ENCODE measurements at regions of chr19 and their contacts with region 1.

Region 1: GRCh38 chr19:1064661-1065605 is 2.0 kb upstream of the ARHGAP45 start:
- DNase-seq: no peak
- ATAC-seq: peak; percentile 73
- H3K4me3 ChIP-seq: no peak overlapping the region
- H3K27ac ChIP-seq: no peak overlapping the region
- H3K4me1 ChIP-seq: peaks cover 17% of the 10 kb centered on the region
- H3K27me3 ChIP-seq: no peaks in the 10 kb centered on the region
- CTCF ChIP-seq: peak; percentile 73 to 85 (median 82)
- EP300 ChIP-seq: no peak; a peak in 1 of 4 replicates
- POLR2A ChIP-seq: no peak; the same call in 1 of the 2 replicates
- RAD21 ChIP-seq: peak; percentile 54

Region 2: DNA sequence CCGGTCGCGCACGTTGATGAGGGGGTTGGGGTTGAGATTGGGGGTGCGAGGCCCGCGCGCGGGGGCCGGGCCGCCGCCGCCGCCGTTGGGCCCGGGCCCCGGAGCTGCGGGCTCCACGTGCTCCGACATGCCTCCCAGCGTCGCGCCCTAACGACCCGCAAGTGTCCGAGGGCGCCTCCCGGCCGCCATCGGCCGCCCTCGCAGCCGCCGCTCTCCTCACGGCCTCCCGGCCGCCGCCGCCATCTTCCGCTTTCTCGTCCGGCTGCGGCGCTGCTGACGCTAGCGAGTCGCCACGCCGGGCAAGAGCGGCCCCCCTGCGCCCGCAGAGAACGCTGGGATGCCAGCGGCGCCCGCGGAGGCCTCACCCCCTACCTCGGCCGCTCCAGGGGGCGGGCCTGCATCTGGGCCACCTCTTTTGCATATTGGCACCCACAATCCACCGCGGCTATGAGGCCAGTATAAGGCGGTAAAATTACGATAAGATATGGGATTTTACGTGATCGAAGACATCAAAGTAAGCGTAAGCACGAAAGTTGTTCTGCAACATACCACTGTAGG is 44.0 kb before region 1 on chr19 and contains the start of gene TMEM259:
- CTCF ChIA-PET with region 1: interaction called, 3 read pairs
- POLR2A ChIA-PET with region 1: interaction called, 23 read pairs
- RAD21 ChIA-PET with region 1: interaction called, 19 read pairs
- SMC1A ChIA-PET with region 1: interaction called, 4 read pairs
- in situ Hi-C with region 1: no loop called
- intact Hi-C with region 1: loop called (anchors 1 kb)
- DNase-seq: peak; percentile 92
- ATAC-seq: peak; percentile 86
- H3K4me3 ChIP-seq: peak within 1 kb of the TSS; percentile 83
- H3K27ac ChIP-seq: peak within 1 kb of the TSS; percentile 99
- H3K4me1 ChIP-seq: peaks cover 30% of the 10 kb centered on the region
- H3K27me3 ChIP-seq: no peaks in the 10 kb centered on the region
- CTCF ChIP-seq: no peak
- EP300 ChIP-seq: no peak
- POLR2A ChIP-seq: peak; percentile 82
- RAD21 ChIP-seq: no peak
- polyA plus RNA-seq, gene TMEM259: 0.43 to 0.86 TPM

Region 3: DNA sequence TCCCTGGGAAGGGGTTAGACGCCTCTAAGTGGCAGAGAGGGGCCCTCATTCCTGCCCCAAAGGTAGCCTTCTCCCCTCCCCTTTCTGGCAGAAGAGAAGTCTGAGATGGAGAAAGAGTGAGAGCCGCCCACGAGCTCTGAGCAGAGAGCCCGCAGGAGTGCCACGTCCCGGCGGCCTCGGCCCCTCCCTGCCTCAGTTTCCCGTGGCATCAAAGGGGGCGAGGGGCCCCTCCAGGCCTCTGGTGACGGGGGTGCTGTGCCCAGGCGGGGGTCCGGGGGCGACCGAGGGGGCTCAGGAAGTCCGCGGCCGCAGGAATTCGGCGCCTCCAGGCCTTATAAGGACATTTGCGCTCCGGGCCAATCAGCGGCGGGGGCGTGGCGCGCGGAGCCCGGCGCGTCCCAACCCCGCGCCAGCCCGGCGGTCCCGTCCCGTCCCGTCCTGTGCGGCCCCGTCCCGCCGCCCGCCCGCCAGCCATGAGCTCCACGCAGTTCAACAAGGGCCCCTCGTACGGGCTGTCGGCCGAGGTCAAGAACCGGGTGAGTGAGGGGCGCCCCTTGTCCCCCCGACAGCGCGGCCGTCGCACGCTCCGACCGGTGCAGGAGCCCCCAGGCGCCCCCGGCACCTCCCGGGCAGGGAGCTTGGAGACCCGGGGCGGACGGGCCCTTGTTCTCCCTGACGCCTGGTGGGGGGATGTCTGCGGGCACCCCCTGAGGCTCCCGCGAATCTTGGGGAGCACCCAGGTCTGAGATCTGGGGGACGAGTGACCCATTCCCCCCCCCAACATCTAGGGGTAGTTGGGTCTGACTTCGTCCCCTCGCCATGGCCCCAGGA is 38.5 kb before region 1 on chr19 and contains the start of gene CNN2:
- CTCF ChIA-PET with region 1: interaction called, 3 read pairs
- POLR2A ChIA-PET with region 1: interaction called, 23 read pairs
- RAD21 ChIA-PET with region 1: interaction called, 19 read pairs
- SMC1A ChIA-PET with region 1: interaction called, 3 read pairs
- in situ Hi-C with region 1: no loop called
- intact Hi-C with region 1: loop called (anchors 1 kb)
- DNase-seq: no peak
- ATAC-seq: peak; percentile 84
- H3K4me3 ChIP-seq: peak within 1 kb of the TSS; percentile 90
- H3K27ac ChIP-seq: peak within 1 kb of the TSS; percentile 92
- H3K4me1 ChIP-seq: peaks cover 6% of the 10 kb centered on the region
- H3K27me3 ChIP-seq: no peaks in the 10 kb centered on the region
- CTCF ChIP-seq: no peak
- EP300 ChIP-seq: no peak
- POLR2A ChIP-seq: peak; percentile 89
- RAD21 ChIP-seq: no peak
- polyA plus RNA-seq, gene CNN2: 34.7 to 42.5 TPM

Region 4: DNA sequence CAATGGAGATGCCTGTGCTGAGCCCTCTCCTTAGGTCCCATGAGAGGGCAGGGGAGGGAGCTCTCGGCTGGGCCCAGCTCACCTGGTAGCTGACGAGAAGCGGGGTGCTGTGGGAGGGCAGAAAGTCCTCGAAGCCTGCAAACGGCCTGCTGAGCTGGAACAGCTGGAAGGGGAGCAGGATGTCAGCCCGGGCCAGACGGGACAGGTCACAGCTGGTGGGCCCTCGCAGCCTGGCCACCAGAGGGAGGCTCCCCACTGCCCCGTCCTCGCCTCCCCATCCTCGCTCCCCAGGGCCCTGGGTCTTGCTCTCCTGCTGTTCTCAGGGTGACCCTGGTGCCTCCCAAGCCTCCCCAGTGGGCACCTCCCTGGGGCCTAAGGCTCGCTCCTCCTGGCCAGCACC is 58.9 kb after region 1 on chr19:
- CTCF ChIA-PET with region 1: no interaction called
- POLR2A ChIA-PET with region 1: no interaction called
- RAD21 ChIA-PET with region 1: no interaction called
- SMC1A ChIA-PET with region 1: no interaction called
- in situ Hi-C with region 1: no loop called
- intact Hi-C with region 1: no loop called
- DNase-seq: no peak
- ATAC-seq: no peak
- H3K4me3 ChIP-seq: no peak overlapping the region
- H3K27ac ChIP-seq: no peak overlapping the region
- H3K4me1 ChIP-seq: no peaks in the 10 kb centered on the region
- H3K27me3 ChIP-seq: no peaks in the 10 kb centered on the region
- CTCF ChIP-seq: no peak
- EP300 ChIP-seq: no peak
- POLR2A ChIP-seq: no peak
- RAD21 ChIP-seq: no peak

Region 5: GRCh38 chr19:1260636-1261537 is 196.0 kb after region 1 on chr19:
- CTCF ChIA-PET with region 1: no interaction called
- POLR2A ChIA-PET with region 1: interaction called, 11 read pairs
- RAD21 ChIA-PET with region 1: interaction called, 6 read pairs
- SMC1A ChIA-PET with region 1: no interaction called
- in situ Hi-C with region 1: no loop called
- intact Hi-C with region 1: no loop called
- DNase-seq: peak; percentile 85
- ATAC-seq: peak; percentile 69
- H3K4me3 ChIP-seq: peak overlapping the region; percentile 92
- H3K27ac ChIP-seq: peak overlapping the region; percentile 96
- H3K4me1 ChIP-seq: peaks cover 54% of the 10 kb centered on the region
- H3K27me3 ChIP-seq: no peaks in the 10 kb centered on the region
- CTCF ChIP-seq: no peak
- EP300 ChIP-seq: 0 out of 4 replicates have a peak, but pooled peaks of 1 of the 2 experiments have one; percentile 19
- POLR2A ChIP-seq: peak; percentile 39; the same call in 1 of the 2 replicates
- RAD21 ChIP-seq: no peak